Mammary epithelial cell (primary cell): ENCODE measurements at regions of chr11 and their contacts with region 1.

Region 1: GRCh38 chr11:11563200-11563975 is 58.4 kb downstream of the GALNT18 start:
- DNase-seq: no peak
- H3K4me3 ChIP-seq: no peak overlapping the region
- H3K27ac ChIP-seq: no peak overlapping the region
- H3K4me1 ChIP-seq: peaks cover 17% of the 10 kb centered on the region
- H3K27me3 ChIP-seq: no peaks in the 10 kb centered on the region
- CTCF ChIP-seq: no peak

Region 2: GRCh38 chr11:11476971-11477645 is 86.3 kb before region 1 on chr11:
- CTCF ChIA-PET with region 1: no interaction called
- dilution Hi-C with region 1: loop called (anchors 5 kb)
- in situ Hi-C with region 1: no loop called
- intact Hi-C with region 1: no loop called
- DNase-seq: peak; percentile 55
- H3K4me3 ChIP-seq: no peak overlapping the region
- H3K27ac ChIP-seq: peak overlapping the region; percentile 59
- H3K4me1 ChIP-seq: peaks cover 29% of the 10 kb centered on the region
- H3K27me3 ChIP-seq: no peaks in the 10 kb centered on the region
- CTCF ChIP-seq: no peak

Region 3: GRCh38 chr11:11608783-11609232 is 45.4 kb after region 1 on chr11:
- CTCF ChIA-PET with region 1: no interaction called
- dilution Hi-C with region 1: loop called (anchors 5 kb)
- in situ Hi-C with region 1: no loop called
- intact Hi-C with region 1: no loop called
- DNase-seq: peak; percentile 68
- H3K4me3 ChIP-seq: no peak overlapping the region
- H3K27ac ChIP-seq: peak overlapping the region; percentile 45
- H3K4me1 ChIP-seq: peaks cover 26% of the 10 kb centered on the region
- H3K27me3 ChIP-seq: no peaks in the 10 kb centered on the region
- CTCF ChIP-seq: no peak

Region 4: GRCh38 chr11:11635443-11635842 is 72.1 kb after region 1 on chr11:
- CTCF ChIA-PET with region 1: no interaction called
- dilution Hi-C with region 1: loop called (anchors 5 kb)
- in situ Hi-C with region 1: no loop called
- intact Hi-C with region 1: no loop called
- DNase-seq: no peak
- H3K4me3 ChIP-seq: no peak overlapping the region
- H3K27ac ChIP-seq: no peak overlapping the region
- H3K4me1 ChIP-seq: no peaks in the 10 kb centered on the region
- H3K27me3 ChIP-seq: no peaks in the 10 kb centered on the region
- CTCF ChIP-seq: no peak

Region 5: DNA sequence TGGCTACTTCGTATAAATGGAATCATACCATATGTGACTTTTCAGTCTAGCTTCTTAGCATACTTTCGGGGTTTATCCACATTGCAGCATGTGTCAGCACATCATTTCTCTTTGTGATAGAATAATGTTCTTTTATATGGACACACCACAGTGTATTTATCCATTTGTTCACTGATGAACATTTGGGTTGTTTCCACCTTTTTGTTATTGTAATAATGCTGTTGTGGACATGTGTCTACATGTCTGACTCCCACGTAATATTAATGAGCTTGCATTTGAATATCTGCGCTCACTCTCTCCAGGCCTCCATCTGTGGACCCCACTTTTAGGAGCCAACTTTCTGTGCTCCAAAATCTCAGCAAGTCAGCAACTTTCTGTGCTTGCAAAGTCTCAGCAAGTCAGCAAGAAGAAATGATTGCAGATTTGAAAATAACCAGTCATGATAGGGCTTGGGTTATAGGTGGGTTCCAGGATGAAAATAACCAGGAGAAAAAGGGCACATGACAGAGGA is 112.3 kb after region 1 on chr11:
- CTCF ChIA-PET with region 1: no interaction called
- dilution Hi-C with region 1: no loop called
- in situ Hi-C with region 1: no loop called
- intact Hi-C with region 1: no loop called
- DNase-seq: peak; percentile 7
- H3K4me3 ChIP-seq: no peak overlapping the region
- H3K27ac ChIP-seq: no peak overlapping the region
- H3K4me1 ChIP-seq: peaks cover 5% of the 10 kb centered on the region
- H3K27me3 ChIP-seq: no peaks in the 10 kb centered on the region
- CTCF ChIP-seq: no peak